Kidney (tissue), 22 donors: ENCODE measurements at regions of chr11 and their contacts with region 1.

Region 1: GRCh38 chr11:73652046-73652730 is 5.8 kb downstream of the PLEKHB1 start:
- DNase-seq: peak in 4 of 5 donors; percentile 53 to 67 (median 61)
- H3K4me3 ChIP-seq: no peak overlapping the region
- H3K27ac ChIP-seq: no peak overlapping the region
- H3K4me1 ChIP-seq: peaks cover 0 to 4% (median 0%) of the 10 kb centered on the region in 3 donors
- H3K27me3 ChIP-seq: no peaks in the 10 kb centered on the region
- CTCF ChIP-seq: no peak

Region 2: DNA sequence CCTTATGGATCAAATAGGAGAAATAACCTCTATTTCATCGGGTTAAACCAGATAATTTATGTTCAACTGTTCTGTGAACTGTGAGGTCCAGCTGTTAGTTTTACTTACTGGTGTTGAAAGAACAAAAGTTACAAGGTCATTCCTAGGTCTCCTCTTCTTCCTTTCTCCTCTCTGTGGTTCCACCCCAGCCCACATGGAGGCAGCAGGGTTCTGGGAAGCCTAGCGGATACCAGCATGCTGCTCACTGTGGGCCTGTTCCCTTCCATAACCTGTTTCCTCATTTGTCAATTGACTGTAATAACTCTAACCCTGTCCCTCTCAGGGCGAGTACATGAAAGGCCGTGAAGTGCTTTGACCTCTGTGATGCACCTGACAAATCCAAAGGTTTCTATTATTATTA is 248.1 kb before region 1 on chr11:
- intact Hi-C with region 1: loop called (anchors 10 kb)
- DNase-seq: peak in 4 of 5 donors; percentile 55 to 85 (median 69)
- H3K4me3 ChIP-seq: no peak overlapping the region
- H3K27ac ChIP-seq: no peak overlapping the region
- H3K4me1 ChIP-seq: peaks cover 0 to 3% (median 2%) of the 10 kb centered on the region in 3 donors
- H3K27me3 ChIP-seq: no peaks in the 10 kb centered on the region
- CTCF ChIP-seq: peak; percentile 54

Region 3: GRCh38 chr11:74398244-74399159 is 746.3 kb after region 1 on chr11 and contains the start of gene PGM2L1:
- intact Hi-C with region 1: no loop called
- DNase-seq: peak; percentile 97 to 98 (median 97)
- H3K4me3 ChIP-seq: peak within 1 kb of the TSS; percentile 92 to 100 (median 99)
- H3K27ac ChIP-seq: peak within 1 kb of the TSS; percentile 95
- H3K4me1 ChIP-seq: no peaks in the 10 kb centered on the region
- H3K27me3 ChIP-seq: no peaks in the 10 kb centered on the region
- CTCF ChIP-seq: no peak
- total RNA-seq, gene PGM2L1: 11.5 TPM